ENCODE measurements at regions of chr6 and their contacts with region 1.

Region 1: DNA sequence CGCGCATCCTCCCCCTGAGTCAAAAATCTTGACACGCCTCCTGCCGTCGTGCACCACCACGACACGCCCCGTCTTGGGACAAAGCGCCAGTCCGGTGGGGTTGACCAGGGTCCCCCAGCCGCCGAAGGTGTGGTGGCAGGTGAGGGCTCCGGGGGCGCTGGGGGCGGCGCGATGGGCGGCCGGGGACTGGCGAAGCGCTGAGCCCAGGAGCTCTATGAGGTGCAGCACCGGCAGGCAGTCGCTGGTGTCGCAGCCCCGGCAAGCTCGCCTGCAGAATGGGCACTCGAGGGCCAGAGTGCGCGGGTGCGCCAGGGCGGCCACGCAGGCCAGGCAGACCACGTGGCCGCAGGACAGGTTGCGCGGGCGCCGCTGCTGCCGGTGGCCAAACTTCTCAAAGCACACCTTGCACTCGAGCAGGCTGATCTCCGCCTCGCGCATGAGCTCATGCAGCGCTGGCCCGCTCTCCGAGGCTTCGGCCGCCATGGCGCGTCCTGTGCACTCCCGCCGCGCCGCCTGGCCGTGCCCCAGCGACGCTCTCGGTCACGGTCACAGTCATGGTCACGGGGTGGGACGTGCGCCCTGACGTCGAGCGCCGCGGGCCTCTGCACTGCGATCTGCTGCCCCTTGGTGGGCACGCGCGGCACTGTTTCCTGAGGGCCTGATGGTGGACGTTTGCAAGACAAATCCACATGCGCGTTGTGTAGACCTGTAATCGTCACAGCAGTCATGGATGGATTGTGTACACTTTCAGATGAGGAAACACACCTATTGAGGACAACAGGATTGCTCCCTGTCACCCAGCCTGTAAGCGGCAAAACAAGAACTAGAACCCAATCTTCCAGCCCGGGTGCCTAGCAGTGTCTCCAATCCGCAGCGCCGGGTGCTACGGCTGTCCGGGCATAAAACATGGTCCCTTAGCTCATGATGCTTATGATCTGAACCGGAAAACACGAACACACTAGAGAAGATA is at the start of gene NHLRC1:
- H3K4me3 ChIP-seq: peak within 1 kb of the TSS; percentile 37
- H3K27ac ChIP-seq: peak within 1 kb of the TSS; percentile 57; the same call in 1 of the 2 replicates
- H3K4me1 ChIP-seq: no peaks in the 10 kb centered on the region; the same call in 1 of the 2 replicates
- CTCF ChIP-seq: no peak

Region 2: DNA sequence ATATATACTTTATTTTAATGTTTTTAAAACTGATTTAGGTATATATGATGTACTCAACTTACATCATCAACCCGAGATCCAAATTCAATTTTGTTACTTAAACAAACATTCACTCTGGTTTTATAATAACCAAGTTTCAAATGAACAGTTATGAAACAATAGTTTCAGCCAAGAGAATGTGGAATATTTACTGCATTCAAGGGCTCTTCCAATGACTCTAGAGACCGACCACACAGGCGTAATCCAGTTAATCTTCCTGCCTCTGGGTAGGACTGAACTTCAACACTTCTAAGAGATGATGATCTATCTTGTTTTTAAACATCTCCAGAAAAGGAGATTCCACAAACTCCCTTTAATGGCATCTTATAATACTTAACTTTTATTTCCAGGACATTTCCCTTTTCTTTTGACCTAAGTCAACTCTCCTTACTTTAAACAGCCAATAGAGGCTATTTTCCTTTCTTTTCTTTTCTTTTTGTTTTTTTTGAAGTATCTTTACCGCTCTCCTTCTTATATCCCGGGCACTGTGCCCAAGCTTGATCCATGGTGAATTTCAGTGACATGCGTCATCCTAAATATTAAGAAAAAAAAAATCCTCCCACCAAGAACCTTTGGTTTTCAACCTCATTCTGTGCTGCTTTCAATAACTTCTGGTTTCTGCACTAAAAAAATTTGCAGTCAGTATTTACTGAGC is 245.1 kb before region 1 on chr6:
- CTCF ChIA-PET with region 1: no interaction called
- POLR2A ChIA-PET with region 1: no interaction called
- H3K4me3 ChIP-seq: no peak overlapping the region
- H3K27ac ChIP-seq: no peak overlapping the region
- H3K4me1 ChIP-seq: no peaks in the 10 kb centered on the region
- CTCF ChIP-seq: no peak

Region 3: GRCh38 chr6:18088419-18089296 is 33.8 kb before region 1 on chr6:
- CTCF ChIA-PET with region 1: interaction called, 10 read pairs
- POLR2A ChIA-PET with region 1: no interaction called
- H3K4me3 ChIP-seq: no peak overlapping the region
- H3K27ac ChIP-seq: no peak overlapping the region
- H3K4me1 ChIP-seq: no peaks in the 10 kb centered on the region
- CTCF ChIP-seq: no peak

Region 4: GRCh38 chr6:18138906-18139305 is 16.5 kb after region 1 on chr6:
- CTCF ChIA-PET with region 1: interaction called, 11 read pairs
- POLR2A ChIA-PET with region 1: no interaction called
- H3K4me3 ChIP-seq: no peak overlapping the region
- H3K27ac ChIP-seq: no peak overlapping the region
- H3K4me1 ChIP-seq: no peaks in the 10 kb centered on the region
- CTCF ChIP-seq: no peak

Region 5: GRCh38 chr6:18237167-18237566 is 114.8 kb after region 1 on chr6:
- CTCF ChIA-PET with region 1: no interaction called
- POLR2A ChIA-PET with region 1: no interaction called
- H3K4me3 ChIP-seq: no peak overlapping the region
- H3K27ac ChIP-seq: no peak overlapping the region
- H3K4me1 ChIP-seq: no peaks in the 10 kb centered on the region
- CTCF ChIP-seq: no peak

Measured in HEK293 (cell line).